HEK293T (cell line): ENCODE measurements at regions of chr6 and their contacts with region 1.

Region 1: DNA sequence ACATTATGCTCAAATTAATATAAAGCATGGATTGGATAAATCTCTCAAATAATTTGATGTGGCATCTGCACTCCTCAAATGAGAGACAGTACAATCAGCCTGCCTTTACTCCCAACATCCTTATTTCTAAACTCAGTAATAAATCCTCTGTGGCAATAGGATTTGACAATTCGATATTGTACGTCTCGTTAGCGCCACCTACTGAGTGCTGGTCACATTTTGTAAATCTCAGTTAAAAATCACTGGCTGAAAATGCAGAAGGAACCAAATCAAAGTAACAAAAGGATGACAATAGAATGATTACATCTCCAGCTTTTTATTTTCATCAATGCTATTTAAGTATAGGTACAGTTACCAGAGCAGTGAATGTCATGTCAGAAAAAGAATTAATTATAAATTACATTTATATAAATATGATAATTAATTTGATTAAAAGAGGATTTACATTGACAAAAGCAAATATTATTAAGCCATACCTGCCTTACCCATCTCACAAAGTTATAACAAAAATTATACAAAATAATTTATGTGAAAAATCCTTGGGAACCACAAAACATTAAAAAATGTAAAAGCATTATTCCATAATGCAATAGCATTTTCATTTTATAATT is 20.2 kb upstream of the GJE1 start:
- DNase-seq: peak; percentile 68

Region 2: GRCh38 chr6:141988954-141989705 is 123.4 kb before region 1 on chr6:
- CTCF ChIA-PET with region 1: interaction called, 12 read pairs
- POLR2A ChIA-PET with region 1: no interaction called
- DNase-seq: peak; percentile 61